Motor neuron (in vitro differentiated cells): ENCODE measurements at regions of chr6 and their contacts with region 1.

Region 1: DNA sequence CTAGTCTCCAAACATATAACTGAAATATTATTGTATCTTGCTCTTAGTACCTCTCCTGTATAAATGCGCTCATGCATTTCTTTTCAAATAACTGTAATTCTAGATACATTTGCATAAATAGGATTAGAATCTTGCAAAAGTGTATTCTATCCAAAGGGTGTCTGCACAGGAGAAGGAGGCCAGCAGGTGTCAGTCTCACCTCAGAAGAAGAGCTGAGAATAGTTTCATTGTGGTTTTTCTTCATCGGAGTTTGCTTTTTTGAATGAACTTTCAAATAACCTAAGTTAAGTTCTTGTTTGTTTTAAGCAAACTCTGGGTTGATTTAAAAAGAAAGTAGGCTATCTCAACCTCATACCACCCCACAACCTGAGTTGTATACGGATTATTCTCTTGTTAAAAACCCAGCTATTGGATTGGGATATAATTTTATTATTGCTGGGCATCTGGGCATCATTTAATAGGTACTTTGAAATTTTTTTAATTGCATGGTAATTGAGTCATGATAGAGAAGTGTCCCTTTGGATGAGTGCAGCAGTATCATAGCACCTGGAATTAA is 125.0 kb upstream of the MLIP start:
- ATAC-seq: peak in 6 of 8 experiments; percentile 32 to 80 (median 43)
- H3K4me3 ChIP-seq: no peak overlapping the region
- H3K27ac ChIP-seq: no peak overlapping the region
- H3K4me1 ChIP-seq: peaks cover 9 to 10% of the 10 kb centered on the region in 2 donors

Region 2: GRCh38 chr6:54037277-54037779 is 51.1 kb after region 1 on chr6:
- in situ Hi-C with region 1: no loop called
- ATAC-seq: no peak
- H3K4me3 ChIP-seq: no peak overlapping the region
- H3K27ac ChIP-seq: no peak overlapping the region
- H3K4me1 ChIP-seq: no peaks in the 10 kb centered on the region

Region 3: DNA sequence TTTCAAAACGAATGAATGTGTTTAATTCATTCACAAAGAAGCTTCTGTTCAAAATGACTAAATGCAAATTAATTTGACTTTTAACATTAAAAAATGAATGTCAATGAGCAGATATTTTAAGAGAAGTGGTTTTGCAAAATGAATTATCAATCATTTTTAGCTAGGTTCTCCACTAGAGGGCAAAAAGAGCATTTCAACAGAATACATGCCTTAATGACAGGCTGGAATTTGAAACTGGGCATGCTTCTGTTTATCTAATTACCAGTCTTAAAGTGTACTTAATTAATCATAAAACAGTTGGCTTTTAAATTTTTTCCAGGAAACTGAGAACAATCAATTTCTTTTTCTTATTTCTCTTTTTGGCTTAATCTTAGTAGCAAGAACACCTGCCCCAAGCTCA is 258.2 kb after region 1 on chr6:
- in situ Hi-C with region 1: loop called in 1 of 9 experiments (anchors 25 kb)
- ATAC-seq: no peak
- H3K4me3 ChIP-seq: no peak overlapping the region
- H3K27ac ChIP-seq: no peak overlapping the region
- H3K4me1 ChIP-seq: no peaks in the 10 kb centered on the region

Region 4: GRCh38 chr6:54267798-54268197 is 281.6 kb after region 1 on chr6:
- in situ Hi-C with region 1: loop called in 1 of 9 experiments (anchors 25 kb)
- ATAC-seq: peak in 3 of 8 experiments; percentile 33 to 52 (median 42)
- H3K4me3 ChIP-seq: no peak overlapping the region
- H3K27ac ChIP-seq: no peak overlapping the region
- H3K4me1 ChIP-seq: no peaks in the 10 kb centered on the region

Region 5: GRCh38 chr6:55069132-55069781 is 1083.0 kb after region 1 on chr6:
- in situ Hi-C with region 1: loop called in 3 of 9 experiments (anchors 25 kb)
- ATAC-seq: peak in 4 of 8 experiments; percentile 22 to 51 (median 30)
- H3K4me3 ChIP-seq: no peak overlapping the region
- H3K27ac ChIP-seq: no peak overlapping the region
- H3K4me1 ChIP-seq: no peaks in the 10 kb centered on the region

Region 6: GRCh38 chr6:55239099-55239498 is 1252.9 kb after region 1 on chr6:
- in situ Hi-C with region 1: loop called in 5 of 9 experiments (anchors 10 to 25 kb)
- ATAC-seq: no peak
- H3K4me3 ChIP-seq: no peak overlapping the region
- H3K27ac ChIP-seq: no peak overlapping the region
- H3K4me1 ChIP-seq: no peaks in the 10 kb centered on the region